ENCODE measurements at regions of chr5 and their contacts with region 1.

Region 1: GRCh38 chr5:74017786-74018211 is 391.8 kb downstream of the ARHGEF28 start:
- DNase-seq: no peak

Region 2: DNA sequence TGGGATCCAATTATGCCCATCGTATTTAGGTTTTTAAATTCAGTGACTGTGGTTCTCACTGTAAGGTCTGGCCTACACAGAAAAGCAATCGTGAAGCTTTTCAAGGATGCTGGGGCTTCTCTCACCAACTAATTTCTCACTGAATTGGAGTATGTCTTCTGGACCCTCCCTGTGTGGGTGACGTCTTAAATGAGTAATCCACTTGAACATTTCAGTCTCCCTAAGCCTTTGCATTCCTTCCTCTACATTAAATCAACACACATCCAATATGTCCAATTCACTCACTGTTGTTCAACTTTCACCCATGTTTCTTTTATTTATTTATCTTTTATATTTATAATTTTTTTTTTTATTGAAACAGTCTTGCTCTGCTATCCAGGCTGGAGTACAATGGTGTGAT is 532.1 kb before region 1 on chr5:
- intact Hi-C with region 1: no loop called
- DNase-seq: no peak

Region 3: GRCh38 chr5:73917433-73917832 is 100.4 kb before region 1 on chr5:
- intact Hi-C with region 1: loop called in 1 of 2 experiments (anchors 10 kb)
- DNase-seq: no peak

Region 4: DNA sequence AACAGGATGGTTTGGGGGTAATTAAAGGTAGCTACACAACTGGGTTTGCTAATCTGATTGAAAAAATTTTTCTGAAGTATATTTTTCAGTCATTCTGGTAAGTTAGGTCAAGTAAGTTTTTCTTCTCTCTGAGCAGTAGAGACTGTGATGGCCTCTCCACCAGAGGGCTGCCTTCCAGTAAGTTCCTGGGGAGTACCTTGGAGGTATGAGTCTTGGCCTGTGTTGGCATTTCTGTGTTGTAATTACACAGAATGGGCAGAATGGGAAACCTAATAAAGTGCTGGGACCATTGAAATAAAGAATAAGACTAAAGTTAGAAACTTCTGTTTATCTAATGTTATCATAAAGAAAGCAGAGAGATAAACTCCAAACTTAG is 39.0 kb after region 1 on chr5:
- intact Hi-C with region 1: no loop called
- DNase-seq: no peak

Region 5: DNA sequence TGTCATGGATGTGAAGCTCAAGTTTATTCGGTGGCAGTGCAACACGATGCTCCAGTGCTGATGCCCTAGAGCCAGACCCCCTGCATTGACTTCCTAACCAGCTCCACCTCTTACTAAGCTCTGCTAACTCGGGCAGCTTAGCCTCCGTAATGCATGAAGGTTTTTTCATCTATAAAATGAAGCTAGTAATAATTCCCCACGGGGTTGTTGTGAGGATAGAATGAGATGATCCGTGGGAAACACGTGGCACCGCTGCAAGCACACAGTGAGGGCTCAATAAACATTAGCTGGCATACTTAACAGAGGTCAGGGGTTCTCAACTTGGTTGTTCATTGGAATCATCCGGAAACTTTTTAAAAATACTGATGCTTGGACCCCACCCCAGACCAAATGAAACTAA is 615.9 kb after region 1 on chr5:
- intact Hi-C with region 1: loop called in 1 of 2 experiments (anchors 1 kb)
- DNase-seq: no peak

Region 6: GRCh38 chr5:75281716-75282465 is 1264.1 kb after region 1 on chr5:
- intact Hi-C with region 1: no loop called
- DNase-seq: no peak